ENCODE measurements at regions of chr6 and their contacts with region 1.

Region 1: DNA sequence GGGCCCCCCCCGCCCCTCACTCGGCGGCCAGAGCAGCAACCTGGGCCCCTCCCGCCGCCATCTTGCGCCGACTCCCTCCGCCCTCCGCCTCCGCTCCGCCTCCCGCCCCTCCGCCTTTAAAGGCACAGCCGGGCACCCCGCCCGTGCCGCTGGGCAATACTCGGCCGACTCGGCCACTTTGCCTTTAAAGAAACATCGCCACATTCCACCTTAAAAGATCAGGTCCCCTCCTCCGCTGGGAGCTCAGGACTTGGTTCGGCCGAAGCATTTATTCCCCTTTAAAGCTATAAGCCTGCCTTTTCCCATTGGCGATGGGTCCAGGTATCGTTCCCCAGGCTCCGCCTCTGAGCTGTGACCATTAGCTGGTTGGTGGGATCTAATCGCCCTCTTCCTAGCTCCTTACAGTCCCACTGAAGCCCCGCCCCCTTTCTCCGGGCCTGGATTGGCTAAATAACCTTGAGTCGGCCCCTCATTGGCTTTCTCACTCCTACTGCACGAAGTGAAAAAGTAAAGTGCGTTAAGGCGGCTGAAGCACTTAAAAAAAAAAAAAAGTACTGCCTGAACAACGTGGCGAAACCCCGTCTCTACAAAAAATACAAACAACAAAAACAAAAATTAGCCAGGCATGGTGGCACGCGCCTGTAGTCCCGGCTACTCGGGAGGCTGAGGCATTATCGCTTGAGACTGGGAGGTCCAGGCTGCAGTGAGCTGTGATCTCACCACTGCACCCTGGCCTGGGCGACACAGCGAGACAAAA is at the start of gene ZBTB22:
- DNase-seq: peak; percentile 100
- ATAC-seq: peak; percentile 67
- H3K4me3 Mint-ChIP-seq: peak within 1 kb of the TSS; percentile 97
- H3K27ac Mint-ChIP-seq: peak within 1 kb of the TSS; percentile 97
- H3K4me1 Mint-ChIP-seq: peaks cover 68% of the 10 kb centered on the region
- H3K27me3 Mint-ChIP-seq: no peaks in the 10 kb centered on the region
- CTCF ChIP-seq: no peak
- total RNA-seq, gene ZBTB22: 7.2 to 7.5 TPM

Region 2: DNA sequence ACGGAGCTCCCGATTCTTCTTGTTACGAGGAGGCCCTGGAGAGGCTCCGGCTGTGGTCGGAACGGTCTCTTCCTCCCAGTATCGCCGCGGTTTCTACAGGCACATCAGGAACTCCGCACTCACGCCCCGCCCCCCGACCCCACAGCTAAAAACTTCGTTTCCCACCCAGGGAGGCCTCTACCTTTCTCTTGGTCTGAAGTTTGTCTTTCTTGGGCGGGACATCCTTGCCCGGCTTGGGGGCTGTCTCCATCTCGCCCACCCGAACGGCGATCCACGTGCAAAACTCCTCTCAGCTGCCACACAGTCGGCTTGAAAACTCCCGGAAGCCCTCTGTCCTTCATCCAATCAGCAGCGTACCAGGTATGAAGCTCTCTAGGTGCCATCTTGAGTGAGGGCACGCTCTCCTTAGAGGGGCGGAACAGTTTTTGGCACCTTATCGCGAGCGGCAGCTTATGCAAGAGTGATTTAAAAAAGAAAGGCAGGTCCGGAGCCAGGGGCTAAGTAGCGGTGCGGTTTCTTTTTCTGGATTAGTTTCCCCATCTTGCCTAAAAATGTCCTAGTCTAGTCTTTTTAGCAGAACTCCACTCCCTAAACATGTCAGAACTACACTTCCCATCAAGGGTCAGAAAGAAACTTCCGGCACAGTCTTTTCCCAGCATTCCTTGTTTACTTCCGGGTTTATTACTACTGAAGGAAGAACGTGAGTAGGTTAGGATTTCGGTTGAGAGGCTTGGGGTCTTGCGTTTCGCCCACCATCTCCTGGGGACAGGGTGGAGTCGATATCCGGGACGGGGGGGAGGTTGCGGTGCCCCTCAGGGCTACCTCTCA is 28.7 kb before region 1 on chr6 and contains the starts of genes PFDN6 and WDR46:
- CTCF ChIA-PET with region 1: interaction called, 3 read pairs
- POLR2A ChIA-PET with region 1: interaction called, 29 read pairs
- intact Hi-C with region 1: no loop called
- DNase-seq: peak; percentile 91
- ATAC-seq: peak; percentile 98
- H3K4me3 Mint-ChIP-seq: peak within 1 kb of the TSS; percentile 89
- H3K27ac Mint-ChIP-seq: peak within 1 kb of the TSS; percentile 89
- H3K4me1 Mint-ChIP-seq: peaks cover 33% of the 10 kb centered on the region
- H3K27me3 Mint-ChIP-seq: no peaks in the 10 kb centered on the region
- CTCF ChIP-seq: no peak
- total RNA-seq, gene PFDN6: 78.1 to 92.3 TPM
- total RNA-seq, gene WDR46: 64.0 to 72.2 TPM

Region 3: DNA sequence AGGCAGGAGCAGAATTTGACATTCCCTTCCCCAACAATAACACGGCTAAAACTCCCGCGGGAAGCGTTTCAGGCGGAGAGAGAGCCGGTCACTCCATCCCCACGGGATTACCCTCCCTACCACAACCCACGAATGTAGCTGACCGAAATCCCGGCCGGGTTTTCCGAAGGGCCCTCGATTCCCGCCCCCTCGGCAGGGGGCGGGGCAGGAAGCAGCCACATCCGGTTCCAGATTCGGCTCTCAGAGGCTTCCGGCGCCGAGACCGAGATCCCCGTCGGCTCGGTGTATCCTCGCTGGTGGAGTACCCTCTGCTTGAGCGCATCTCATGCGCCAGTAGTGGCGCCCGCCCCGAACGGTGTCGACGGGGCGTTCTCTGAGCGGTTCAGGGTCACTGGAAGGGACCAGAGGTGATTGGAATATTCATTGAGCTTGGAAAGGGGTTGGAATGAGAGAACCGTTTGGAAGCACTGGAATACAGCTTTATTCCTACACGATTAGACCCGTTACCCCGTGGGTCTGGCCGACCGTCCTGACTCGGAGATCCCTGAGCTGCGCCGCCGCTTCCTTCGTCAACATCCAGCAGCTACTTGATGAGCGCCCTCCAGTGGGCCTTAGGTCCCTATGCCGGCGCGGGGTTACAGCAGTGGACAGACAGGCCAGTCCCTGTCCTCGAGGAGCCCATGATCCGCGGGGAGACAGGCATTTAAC is 18.5 kb before region 1 on chr6:
- CTCF ChIA-PET with region 1: interaction called, 18 read pairs
- POLR2A ChIA-PET with region 1: interaction called, 102 read pairs
- intact Hi-C with region 1: no loop called
- DNase-seq: peak; percentile 96
- ATAC-seq: peak; percentile 86
- H3K4me3 Mint-ChIP-seq: peak overlapping the region; percentile 97
- H3K27ac Mint-ChIP-seq: peak overlapping the region; percentile 99
- H3K4me1 Mint-ChIP-seq: peaks cover 33% of the 10 kb centered on the region
- H3K27me3 Mint-ChIP-seq: no peaks in the 10 kb centered on the region
- CTCF ChIP-seq: peak; percentile 74

Region 4: GRCh38 chr6:33305052-33305451 is 12.8 kb before region 1 on chr6:
- CTCF ChIA-PET with region 1: interaction called, 18 read pairs
- POLR2A ChIA-PET with region 1: interaction called, 102 read pairs
- intact Hi-C with region 1: no loop called
- DNase-seq: no peak
- ATAC-seq: no peak
- H3K4me3 Mint-ChIP-seq: no peak overlapping the region
- H3K27ac Mint-ChIP-seq: peak overlapping the region; percentile 65
- H3K4me1 Mint-ChIP-seq: peaks cover 45% of the 10 kb centered on the region
- H3K27me3 Mint-ChIP-seq: no peaks in the 10 kb centered on the region
- CTCF ChIP-seq: no peak

Measured in activated CD8-positive, alpha-beta T cell treated with anti-CD3 and anti-CD28 coated beads for 36 hours (primary cell).